ENCODE measurements at regions of chr14 and their contacts with region 1.

Region 1: GRCh38 chr14:74612350-74613021 is 449 bp upstream of the LTBP2 start:
- DNase-seq: peak; percentile 25 to 65
- ATAC-seq: peak; percentile 78 to 84
- H3K4me3 ChIP-seq: peak overlapping the region; percentile 61 to 96 (median 70)
- H3K27ac ChIP-seq: peak overlapping the region; percentile 37 to 56 (median 50)
- H3K4me1 ChIP-seq: peaks cover 7 to 9% of the 10 kb centered on the region in 2 donors
- H3K27me3 ChIP-seq: peaks cover 16 to 37% (median 17%) of the 10 kb centered on the region in 3 donors
- CTCF ChIP-seq: peak; percentile 68 to 94 (median 83)
- POLR2A ChIP-seq: no peak

Region 2: DNA sequence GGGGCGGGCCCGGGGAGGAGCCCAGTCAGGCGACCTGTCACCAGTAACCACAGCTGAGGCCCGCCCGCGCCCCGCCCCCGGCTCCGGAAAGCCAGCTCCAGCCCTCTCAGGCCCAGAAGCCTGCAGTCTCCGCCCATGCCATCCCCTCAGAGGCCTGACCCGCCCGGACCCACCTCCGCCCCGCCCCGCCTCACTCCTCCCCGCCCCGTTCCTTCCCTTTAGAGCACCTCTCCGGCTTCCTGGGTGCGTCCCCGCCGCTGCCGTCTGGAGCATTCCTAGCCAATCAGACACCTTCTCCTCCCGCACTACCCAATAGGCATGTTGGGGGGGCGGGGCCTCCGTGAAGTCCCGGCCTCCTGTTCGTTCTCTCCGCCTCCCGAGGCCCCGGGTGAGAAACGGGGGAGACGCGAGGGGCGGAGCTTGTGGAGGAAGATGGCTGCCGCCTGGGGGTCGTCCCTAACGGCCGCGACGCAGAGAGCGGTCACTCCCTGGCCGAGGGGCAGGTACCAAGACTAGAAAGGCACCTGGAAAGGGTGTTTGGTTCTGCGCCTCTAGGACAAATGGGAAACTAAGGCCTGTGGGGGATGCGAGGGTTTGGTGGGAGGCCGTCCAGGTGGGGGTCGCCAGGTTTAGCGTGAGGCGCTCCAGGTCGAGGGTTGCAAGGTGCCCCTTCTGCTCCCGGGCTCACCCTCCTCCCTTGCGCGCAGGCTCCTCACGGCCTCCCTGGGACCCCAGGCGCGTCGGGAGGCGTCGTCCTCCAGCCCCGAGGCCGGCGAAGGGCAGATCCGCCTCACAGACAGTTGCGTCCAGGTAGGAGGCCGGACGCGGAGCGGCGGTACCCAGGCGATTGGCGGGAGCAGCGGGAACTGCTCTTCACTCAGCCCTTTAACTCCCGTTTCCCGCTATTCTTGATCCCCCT is 118.9 kb before region 1 on chr14 and contains the start of gene ISCA2:
- in situ Hi-C with region 1: loop called in 1 of 4 experiments (anchors 10 kb)
- intact Hi-C with region 1: no loop called
- DNase-seq: peak; percentile 100
- ATAC-seq: peak; percentile 94 to 95
- H3K4me3 ChIP-seq: peak within 1 kb of the TSS; percentile 91 to 97 (median 94)
- H3K27ac ChIP-seq: peak within 1 kb of the TSS; percentile 95 to 98 (median 96)
- H3K4me1 ChIP-seq: peaks cover 22 to 24% of the 10 kb centered on the region in 2 donors
- H3K27me3 ChIP-seq: no peaks in the 10 kb centered on the region
- CTCF ChIP-seq: no peak
- POLR2A ChIP-seq: peak; percentile 40 to 57
- total RNA-seq, gene ISCA2: 9.9 to 11.6 (median 11.4) TPM

Region 3: GRCh38 chr14:74549588-74549987 is 62.9 kb before region 1 on chr14:
- in situ Hi-C with region 1: no loop called
- intact Hi-C with region 1: loop called (anchors 5 kb)
- DNase-seq: no peak
- ATAC-seq: no peak
- H3K4me3 ChIP-seq: no peak overlapping the region
- H3K27ac ChIP-seq: peak overlapping the region; percentile 4 to 56 (median 36)
- H3K4me1 ChIP-seq: peaks cover 18 to 28% of the 10 kb centered on the region in 2 donors
- H3K27me3 ChIP-seq: no peaks in the 10 kb centered on the region
- CTCF ChIP-seq: no peak
- POLR2A ChIP-seq: no peak

Region 4: DNA sequence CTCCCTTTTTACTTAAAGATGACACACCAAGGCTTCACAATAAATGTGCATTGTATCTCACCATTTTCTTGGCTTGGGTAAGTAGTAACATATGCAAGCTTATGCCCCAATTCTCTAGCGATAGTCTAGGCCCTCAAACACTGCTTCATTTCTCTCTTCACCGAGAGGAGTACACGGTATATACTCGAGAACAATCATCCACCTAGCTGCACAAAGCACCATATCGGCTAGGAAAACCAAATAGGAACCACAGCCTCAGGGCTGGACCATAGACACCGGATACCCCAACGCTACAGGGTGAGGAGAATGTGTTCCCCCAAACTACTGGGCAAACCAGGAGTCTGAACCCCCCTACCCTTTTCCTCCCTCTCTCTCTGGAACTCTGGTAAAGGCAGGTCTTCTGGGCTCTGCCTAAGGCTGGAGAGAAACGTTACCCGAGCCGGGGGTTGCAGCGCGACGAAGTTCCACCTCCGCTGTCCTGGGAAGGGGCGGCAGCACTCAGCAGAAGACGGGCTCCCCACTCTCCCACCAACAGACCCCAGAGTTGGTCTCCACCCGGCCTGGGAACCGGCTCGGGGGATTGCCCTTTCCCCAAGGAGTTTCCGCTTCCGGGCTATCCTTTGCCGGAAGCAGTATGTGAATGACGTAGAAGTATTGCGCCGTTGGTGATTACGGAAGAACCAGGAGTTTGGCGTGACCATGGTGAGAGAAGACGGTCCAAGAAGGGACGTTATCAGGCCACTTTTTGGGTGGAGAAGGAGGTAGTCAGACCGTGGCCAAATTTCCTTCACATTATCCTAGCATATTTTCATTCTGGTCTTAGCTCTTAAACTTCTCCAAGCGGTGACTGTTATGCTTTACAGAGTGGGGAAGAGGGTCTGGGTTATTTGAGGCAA is 100.3 kb after region 1 on chr14 and contains the starts of genes AREL1 and FCF1:
- in situ Hi-C with region 1: loop called in 2 of 4 experiments (anchors 5 to 10 kb)
- intact Hi-C with region 1: loop called (anchors 2 kb)
- DNase-seq: peak; percentile 79 to 82
- ATAC-seq: peak; percentile 100
- H3K4me3 ChIP-seq: peak within 1 kb of the TSS; percentile 75 to 97 (median 82)
- H3K27ac ChIP-seq: peak within 1 kb of the TSS; percentile 80 to 91 (median 87)
- H3K4me1 ChIP-seq: peaks cover 19 to 23% of the 10 kb centered on the region in 2 donors
- H3K27me3 ChIP-seq: no peaks in the 10 kb centered on the region
- CTCF ChIP-seq: no peak
- POLR2A ChIP-seq: peak; percentile 83 to 84
- total RNA-seq, gene AREL1: 14.7 to 30.1 (median 22.1) TPM
- total RNA-seq, gene FCF1: 15.1 to 22.9 (median 18.6) TPM

Region 5: DNA sequence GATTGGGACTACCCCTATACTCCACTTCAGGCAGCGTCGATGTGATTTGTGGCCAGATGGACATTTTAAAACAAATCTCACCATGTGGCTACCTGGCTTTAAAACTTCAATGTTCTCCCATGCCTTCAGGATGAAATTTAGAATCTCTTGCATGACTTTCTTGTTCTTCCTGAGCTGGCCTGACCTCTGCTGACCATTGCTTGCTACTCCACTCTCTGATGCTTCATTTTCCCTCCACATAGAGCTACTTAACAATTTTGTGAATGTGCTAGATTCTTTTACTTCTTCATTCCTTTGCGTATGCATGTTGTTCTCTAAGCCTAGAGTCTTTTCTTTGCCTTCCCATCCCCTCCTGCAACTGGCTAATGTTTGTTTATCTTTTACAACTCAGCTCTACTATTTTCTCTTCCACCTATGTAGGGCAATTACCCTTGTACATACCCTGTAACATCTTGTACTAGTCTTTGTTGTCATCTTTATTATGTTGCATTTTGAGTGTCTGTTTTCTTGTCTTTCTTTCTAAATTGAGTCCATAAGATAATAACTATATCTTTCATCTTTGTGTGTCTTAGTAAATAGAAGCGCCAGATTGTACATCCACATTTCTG is 191.8 kb after region 1 on chr14:
- in situ Hi-C with region 1: no loop called
- intact Hi-C with region 1: loop called (anchors 1 kb)
- DNase-seq: no peak
- ATAC-seq: peak in 1 of 2 donors; percentile 51
- H3K4me3 ChIP-seq: no peak overlapping the region
- H3K27ac ChIP-seq: no peak overlapping the region
- H3K4me1 ChIP-seq: no peaks in the 10 kb centered on the region
- H3K27me3 ChIP-seq: no peaks in the 10 kb centered on the region
- CTCF ChIP-seq: peak in 3 of 5 experiments; percentile 20 to 39 (median 23)
- POLR2A ChIP-seq: no peak

Measured in gastrocnemius medialis (tissue), 4 donors.